ENCODE measurements at regions of chr7 and their contacts with region 1.

Region 1: DNA sequence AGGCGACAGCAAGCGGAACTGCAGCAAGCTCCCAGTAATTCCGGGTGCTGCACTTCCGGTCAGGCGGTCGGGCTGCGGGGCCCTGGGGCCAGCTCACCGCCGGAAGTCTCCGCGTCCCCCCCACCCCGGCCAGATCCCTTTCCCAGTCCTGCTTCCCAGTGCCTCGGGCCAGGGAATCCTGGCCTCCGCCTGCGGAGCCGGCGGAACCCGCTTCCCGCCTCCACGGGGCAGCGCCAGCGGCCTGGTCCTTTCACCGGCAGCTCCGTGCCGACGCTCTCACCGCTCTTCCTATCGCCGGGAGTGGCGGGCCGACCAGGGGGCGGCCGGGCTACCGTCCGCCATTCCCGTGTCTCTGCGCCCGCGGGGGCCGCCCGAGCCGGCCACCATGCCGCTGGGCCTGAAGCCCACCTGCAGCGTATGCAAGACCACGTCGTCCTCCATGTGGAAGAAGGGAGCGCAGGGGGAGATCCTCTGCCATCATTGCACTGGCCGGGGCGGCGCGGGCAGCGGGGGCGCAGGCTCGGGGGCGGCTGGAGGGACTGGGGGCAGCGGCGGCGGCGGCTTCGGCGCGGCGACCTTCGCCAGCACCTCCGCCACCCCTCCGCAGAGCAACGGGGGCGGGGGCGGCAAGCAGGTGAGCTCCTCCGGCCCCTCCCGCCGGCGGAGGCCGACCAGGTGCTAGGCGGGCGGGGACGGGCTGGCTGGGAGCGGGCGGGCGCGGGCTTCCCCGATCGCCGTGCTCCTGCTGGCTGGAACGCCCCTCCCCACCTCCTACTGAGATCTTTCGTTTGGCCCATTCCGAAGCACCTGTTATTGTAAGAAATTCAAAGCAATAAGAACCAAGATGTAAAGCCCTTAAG is at the start of gene GATAD1:
- DNase-seq: peak; percentile 63 to 91 (median 72)
- ATAC-seq: peak; percentile 56
- H3K4me3 ChIP-seq: peak within 1 kb of the TSS; percentile 85
- H3K4me3 Mint-ChIP-seq: peak within 1 kb of the TSS; percentile 96
- H3K27ac ChIP-seq: peak within 1 kb of the TSS; percentile 92 to 93
- H3K27ac Mint-ChIP-seq: peak within 1 kb of the TSS; percentile 94
- H3K4me1 ChIP-seq: peaks cover 13% of the 10 kb centered on the region
- H3K4me1 Mint-ChIP-seq: peaks cover 4% of the 10 kb centered on the region
- H3K27me3 ChIP-seq: no peaks in the 10 kb centered on the region
- H3K27me3 Mint-ChIP-seq: no peaks in the 10 kb centered on the region
- CTCF ChIP-seq: peak; percentile 95
- total RNA-seq, gene GATAD1: 12.0 to 13.5 TPM

Region 2: DNA sequence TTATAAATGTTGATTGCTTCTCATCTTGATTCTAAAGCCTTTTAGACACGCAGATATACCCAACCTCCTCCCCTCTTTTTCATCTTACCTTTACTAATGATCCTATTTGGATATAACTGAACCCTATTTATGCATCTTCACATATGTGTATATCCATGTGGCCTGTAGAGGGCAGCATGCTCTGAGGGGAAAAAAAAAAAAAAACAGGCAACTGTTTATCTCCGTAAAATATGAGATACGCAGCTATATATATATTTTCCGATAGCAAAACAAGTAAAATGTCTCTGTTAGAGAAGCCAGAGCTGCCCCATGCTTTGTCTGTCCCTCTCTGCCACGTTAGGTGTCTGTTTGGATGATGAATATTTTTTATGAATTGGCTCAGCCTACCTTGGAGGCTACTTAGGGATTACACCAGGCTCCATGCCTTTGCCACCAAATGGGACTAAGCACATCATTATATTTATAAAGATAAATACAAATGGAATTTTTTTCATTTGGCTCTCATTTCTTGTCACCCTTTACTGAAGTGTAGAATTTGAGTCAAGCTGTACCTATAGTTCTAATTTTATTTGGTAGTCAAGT is 1358.1 kb before region 1 on chr7:
- CTCF ChIA-PET with region 1: no interaction called
- POLR2A ChIA-PET with region 1: interaction called, 5 read pairs
- intact Hi-C with region 1: loop called in 1 of 2 experiments (anchors 10 kb)
- DNase-seq: peak in 3 of 14 experiments; percentile 39 to 57 (median 45)
- ATAC-seq: peak; percentile 38
- H3K4me3 ChIP-seq: no peak overlapping the region
- H3K4me3 Mint-ChIP-seq: no peak overlapping the region
- H3K27ac ChIP-seq: no peak overlapping the region
- H3K27ac Mint-ChIP-seq: no peak overlapping the region
- H3K4me1 ChIP-seq: peaks cover 12% of the 10 kb centered on the region
- H3K4me1 Mint-ChIP-seq: peaks cover 19% of the 10 kb centered on the region
- H3K27me3 ChIP-seq: no peaks in the 10 kb centered on the region
- H3K27me3 Mint-ChIP-seq: no peaks in the 10 kb centered on the region
- CTCF ChIP-seq: peak; percentile 70

Region 3: DNA sequence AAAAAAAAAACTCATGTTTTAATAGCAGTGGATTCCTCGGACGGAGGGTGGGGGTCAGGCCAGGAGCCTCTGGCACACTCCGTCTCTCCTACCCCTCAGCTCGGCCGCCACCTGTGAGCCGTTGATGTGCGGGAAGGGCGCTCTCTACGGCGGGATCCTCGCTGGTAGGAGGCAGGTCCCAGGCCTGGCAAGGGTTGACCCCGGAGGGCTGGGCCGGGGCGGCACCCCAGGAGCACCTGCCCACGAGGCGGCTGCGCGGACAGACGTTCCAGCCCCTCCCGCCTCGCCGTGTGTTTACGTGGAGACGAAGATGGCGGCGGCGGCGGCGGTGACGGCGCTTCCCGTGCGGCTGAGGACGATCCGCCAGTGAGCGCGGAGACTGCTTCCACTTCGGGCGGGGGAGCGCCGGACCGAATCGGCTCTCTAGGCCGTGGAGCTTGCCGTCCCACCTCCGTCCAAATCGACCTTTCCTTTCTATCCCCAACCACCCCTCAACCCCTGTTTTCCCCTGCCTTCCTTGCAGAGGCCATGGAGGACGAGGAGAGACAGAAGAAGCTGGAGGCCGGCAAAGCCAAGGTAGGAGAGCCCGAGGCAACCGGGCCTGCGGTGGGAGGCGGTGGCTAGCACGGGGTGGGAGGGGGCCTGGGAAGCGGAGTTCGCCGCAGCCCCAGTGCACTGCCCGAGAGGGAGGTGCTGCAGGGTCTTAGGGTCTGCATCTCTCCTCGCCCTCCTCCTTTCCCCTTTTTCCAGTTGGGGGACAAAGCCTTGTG is 506.8 kb before region 1 on chr7 and contains the start of gene AKAP9:
- CTCF ChIA-PET with region 1: no interaction called
- POLR2A ChIA-PET with region 1: interaction called, 20 read pairs
- intact Hi-C with region 1: loop called in 1 of 2 experiments (anchors 5 kb)
- DNase-seq: peak; percentile 77 to 94 (median 84)
- ATAC-seq: peak; percentile 88
- H3K4me3 ChIP-seq: peak within 1 kb of the TSS; percentile 96
- H3K4me3 Mint-ChIP-seq: peak within 1 kb of the TSS; percentile 90
- H3K27ac ChIP-seq: peak within 1 kb of the TSS; percentile 82 to 93
- H3K27ac Mint-ChIP-seq: peak within 1 kb of the TSS; percentile 92
- H3K4me1 ChIP-seq: peaks cover 25% of the 10 kb centered on the region
- H3K4me1 Mint-ChIP-seq: peaks cover 49% of the 10 kb centered on the region
- H3K27me3 ChIP-seq: no peaks in the 10 kb centered on the region
- H3K27me3 Mint-ChIP-seq: no peaks in the 10 kb centered on the region
- CTCF ChIP-seq: no peak
- total RNA-seq, gene AKAP9: 62.5 to 64.8 TPM

Region 4: DNA sequence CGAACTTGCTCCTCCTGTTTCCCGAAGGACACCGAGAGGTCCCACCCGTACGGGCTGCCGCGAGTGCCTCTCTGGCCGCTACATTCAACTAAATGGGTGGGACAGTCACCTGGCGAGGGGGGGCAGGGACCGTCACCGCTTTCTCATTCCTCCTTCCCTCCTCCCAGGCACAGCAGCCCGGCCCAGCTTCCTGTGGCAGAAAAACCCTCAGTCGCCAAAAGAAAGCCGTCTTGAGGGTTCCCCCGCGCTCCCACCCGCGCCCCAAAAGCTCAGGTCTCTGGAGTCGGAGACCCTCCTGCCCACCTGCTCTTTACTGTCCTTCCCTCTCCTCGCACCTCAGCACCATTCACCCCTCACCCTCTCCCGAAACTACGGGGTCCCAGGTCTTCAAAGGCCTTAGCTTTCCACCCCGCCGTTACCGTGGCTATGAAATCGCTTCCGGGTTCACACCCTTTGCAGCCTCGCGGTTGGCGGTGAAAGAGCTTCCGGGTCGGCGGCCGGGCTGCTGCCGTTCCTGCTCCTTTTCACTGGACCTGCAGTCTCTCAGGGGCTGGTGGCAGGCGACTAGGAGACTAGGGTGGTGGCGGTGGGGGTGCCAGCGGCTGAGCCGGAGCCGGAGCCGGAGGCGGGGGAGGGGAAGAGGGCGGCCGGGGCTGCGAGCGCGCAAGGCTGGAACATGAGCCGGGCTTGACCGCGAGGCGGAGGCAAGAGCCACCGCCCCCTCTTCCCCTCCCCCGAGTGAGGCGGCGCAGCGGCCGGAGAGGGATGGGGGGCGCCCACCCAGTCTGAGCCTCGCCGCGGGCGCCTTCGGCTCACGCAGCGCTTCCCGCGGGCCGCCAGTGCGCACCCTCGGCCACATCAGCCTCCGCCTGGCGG is 201.8 kb before region 1 on chr7 and contains the starts of genes ANKIB1 and KRIT1:
- CTCF ChIA-PET with region 1: interaction called, 7 read pairs
- POLR2A ChIA-PET with region 1: interaction called, 47 read pairs
- intact Hi-C with region 1: loop called (anchors 1 to 2 kb)
- DNase-seq: peak; percentile 76 to 93 (median 81)
- ATAC-seq: peak; percentile 78
- H3K4me3 ChIP-seq: peak within 1 kb of the TSS; percentile 87
- H3K4me3 Mint-ChIP-seq: peak within 1 kb of the TSS; percentile 97
- H3K27ac ChIP-seq: peak within 1 kb of the TSS; percentile 86 to 96
- H3K27ac Mint-ChIP-seq: peak within 1 kb of the TSS; percentile 99
- H3K4me1 ChIP-seq: peaks cover 17% of the 10 kb centered on the region
- H3K4me1 Mint-ChIP-seq: peaks cover 61% of the 10 kb centered on the region
- H3K27me3 ChIP-seq: no peaks in the 10 kb centered on the region
- H3K27me3 Mint-ChIP-seq: no peaks in the 10 kb centered on the region
- CTCF ChIP-seq: no peak
- total RNA-seq, gene ANKIB1: 60.0 to 66.9 TPM
- total RNA-seq, gene KRIT1: 28.6 to 28.7 TPM

Region 5: GRCh38 chr7:92528188-92528957 is 80.8 kb after region 1 on chr7 and contains the starts of genes PEX1 and RBM48:
- CTCF ChIA-PET with region 1: interaction called, 18 read pairs
- POLR2A ChIA-PET with region 1: interaction called, 77 read pairs
- intact Hi-C with region 1: loop called (anchors 2 to 5 kb)
- DNase-seq: peak; percentile 89 to 99 (median 94)
- ATAC-seq: peak; percentile 92
- H3K4me3 ChIP-seq: peak within 1 kb of the TSS; percentile 94
- H3K4me3 Mint-ChIP-seq: peak within 1 kb of the TSS; percentile 96
- H3K27ac ChIP-seq: peak within 1 kb of the TSS; percentile 86 to 97
- H3K27ac Mint-ChIP-seq: peak within 1 kb of the TSS; percentile 94
- H3K4me1 ChIP-seq: peaks cover 19% of the 10 kb centered on the region
- H3K4me1 Mint-ChIP-seq: peaks cover 52% of the 10 kb centered on the region
- H3K27me3 ChIP-seq: no peaks in the 10 kb centered on the region
- H3K27me3 Mint-ChIP-seq: no peaks in the 10 kb centered on the region
- CTCF ChIP-seq: peak; percentile 42
- total RNA-seq, gene PEX1: 19.7 to 20.7 TPM
- total RNA-seq, gene RBM48: 45.4 to 47.3 TPM

Region 6: GRCh38 chr7:93231799-93232672 is 784.5 kb after region 1 on chr7 and contains the start of gene VPS50:
- CTCF ChIA-PET with region 1: interaction called, 4 read pairs
- POLR2A ChIA-PET with region 1: interaction called, 6 read pairs
- intact Hi-C with region 1: loop called in 1 of 2 experiments (anchors 5 kb)
- DNase-seq: peak; percentile 84 to 97 (median 88)
- ATAC-seq: peak; percentile 94
- H3K4me3 ChIP-seq: peak within 1 kb of the TSS; percentile 67
- H3K4me3 Mint-ChIP-seq: peak within 1 kb of the TSS; percentile 96
- H3K27ac ChIP-seq: peak within 1 kb of the TSS; percentile 79 to 91
- H3K27ac Mint-ChIP-seq: peak within 1 kb of the TSS; percentile 95
- H3K4me1 ChIP-seq: peaks cover 6% of the 10 kb centered on the region
- H3K4me1 Mint-ChIP-seq: peaks cover 25% of the 10 kb centered on the region
- H3K27me3 ChIP-seq: no peaks in the 10 kb centered on the region
- H3K27me3 Mint-ChIP-seq: no peaks in the 10 kb centered on the region
- CTCF ChIP-seq: no peak
- total RNA-seq, gene VPS50: 13.2 to 17.3 TPM

Measured in CD4-positive, alpha-beta T cell (primary cell).